Activated CD8-positive, alpha-beta T cell treated with anti-CD3 and anti-CD28 coated beads for 36 hours (primary cell): ENCODE measurements at regions of chr1 and their contacts with region 1.

Region 1: GRCh38 chr1:209248649-209249279 is 334.8 kb upstream of the CAMK1G start:
- DNase-seq: peak; percentile 70
- ATAC-seq: peak; percentile 73
- H3K4me3 Mint-ChIP-seq: no peak overlapping the region
- H3K27ac Mint-ChIP-seq: no peak overlapping the region
- H3K4me1 Mint-ChIP-seq: no peaks in the 10 kb centered on the region
- H3K27me3 Mint-ChIP-seq: peaks cover 2% of the 10 kb centered on the region
- CTCF ChIP-seq: peak; percentile 84

Region 2: GRCh38 chr1:209168204-209168603 is 80.6 kb before region 1 on chr1:
- CTCF ChIA-PET with region 1: no interaction called
- POLR2A ChIA-PET with region 1: no interaction called
- intact Hi-C with region 1: no loop called
- DNase-seq: no peak
- ATAC-seq: no peak
- H3K4me3 Mint-ChIP-seq: no peak overlapping the region
- H3K27ac Mint-ChIP-seq: no peak overlapping the region
- H3K4me1 Mint-ChIP-seq: no peaks in the 10 kb centered on the region
- H3K27me3 Mint-ChIP-seq: peaks cover 2% of the 10 kb centered on the region
- CTCF ChIP-seq: no peak

Region 3: GRCh38 chr1:209207701-209208286 is 41.0 kb before region 1 on chr1:
- CTCF ChIA-PET with region 1: interaction called, 25 read pairs
- POLR2A ChIA-PET with region 1: no interaction called
- intact Hi-C with region 1: no loop called
- DNase-seq: peak; percentile 58
- ATAC-seq: peak; percentile 60
- H3K4me3 Mint-ChIP-seq: no peak overlapping the region
- H3K27ac Mint-ChIP-seq: no peak overlapping the region
- H3K4me1 Mint-ChIP-seq: peaks cover 2% of the 10 kb centered on the region
- H3K27me3 Mint-ChIP-seq: peaks cover 36% of the 10 kb centered on the region
- CTCF ChIP-seq: peak; percentile 55

Region 4: DNA sequence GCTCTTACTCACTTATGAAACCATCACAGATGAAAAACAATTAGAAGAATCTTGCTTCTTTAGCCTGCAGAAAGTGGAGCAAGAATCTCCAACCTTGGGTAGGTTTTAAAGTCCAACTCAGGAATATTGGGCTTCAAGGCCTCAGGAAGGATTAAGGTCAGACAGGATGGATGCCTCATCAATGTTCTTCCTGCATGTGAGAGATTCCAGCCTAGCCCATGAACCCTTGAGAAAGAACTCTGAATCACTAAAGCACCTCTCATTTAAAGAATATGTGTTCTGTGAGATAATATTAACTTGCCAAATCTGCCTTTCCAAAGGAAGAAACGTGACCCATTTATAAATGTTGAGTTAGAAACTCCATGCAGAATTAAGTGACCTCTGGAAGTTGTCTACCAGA is 10.4 kb before region 1 on chr1:
- CTCF ChIA-PET with region 1: interaction called, 24 read pairs
- POLR2A ChIA-PET with region 1: no interaction called
- intact Hi-C with region 1: no loop called
- DNase-seq: no peak
- ATAC-seq: no peak
- H3K4me3 Mint-ChIP-seq: no peak overlapping the region
- H3K27ac Mint-ChIP-seq: no peak overlapping the region
- H3K4me1 Mint-ChIP-seq: no peaks in the 10 kb centered on the region
- H3K27me3 Mint-ChIP-seq: peaks cover 2% of the 10 kb centered on the region
- CTCF ChIP-seq: no peak

Region 5: GRCh38 chr1:209266590-209267172 is 17.9 kb after region 1 on chr1:
- CTCF ChIA-PET with region 1: interaction called, 11 read pairs
- POLR2A ChIA-PET with region 1: no interaction called
- intact Hi-C with region 1: no loop called
- DNase-seq: no peak
- ATAC-seq: no peak
- H3K4me3 Mint-ChIP-seq: no peak overlapping the region
- H3K27ac Mint-ChIP-seq: no peak overlapping the region
- H3K4me1 Mint-ChIP-seq: no peaks in the 10 kb centered on the region
- H3K27me3 Mint-ChIP-seq: peaks cover 2% of the 10 kb centered on the region
- CTCF ChIP-seq: no peak